MCF 10A (cell line): ENCODE measurements at regions of chr4 and their contacts with region 1.

Region 1: DNA sequence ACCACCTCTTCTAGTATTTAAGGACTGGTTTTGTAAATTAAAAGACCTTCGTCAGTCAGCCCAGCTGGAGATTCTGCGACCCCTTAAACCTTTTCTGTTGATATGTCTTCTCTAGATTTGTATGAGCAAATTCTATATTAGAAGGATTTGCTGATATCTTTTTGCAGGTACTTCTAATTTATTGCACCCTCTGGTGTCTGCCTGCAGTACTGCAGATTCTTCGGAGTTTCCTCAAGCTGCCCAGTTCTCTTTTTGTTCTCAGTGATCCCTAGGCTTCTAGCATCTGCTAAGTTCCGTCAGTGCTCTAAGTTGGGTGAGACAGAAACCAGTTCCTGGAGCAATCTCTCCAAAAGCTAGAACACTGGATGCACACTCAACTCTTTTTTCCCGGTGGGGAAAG is 545.2 kb downstream of the C4orf33 start:
- DNase-seq: peak; percentile 63
- H3K4me3 Mint-ChIP-seq: no peak overlapping the region
- H3K27ac Mint-ChIP-seq: no peak overlapping the region
- H3K4me1 Mint-ChIP-seq: no peaks in the 10 kb centered on the region
- H3K27me3 Mint-ChIP-seq: no peaks in the 10 kb centered on the region
- CTCF ChIP-seq: peak; percentile 43

Region 2: GRCh38 chr4:128440923-128441322 is 1200.3 kb before region 1 on chr4:
- CTCF ChIA-PET with region 1: no interaction called
- POLR2A ChIA-PET with region 1: no interaction called
- intact Hi-C with region 1: no loop called
- DNase-seq: no peak
- H3K4me3 Mint-ChIP-seq: no peak overlapping the region
- H3K27ac Mint-ChIP-seq: no peak overlapping the region
- H3K4me1 Mint-ChIP-seq: no peaks in the 10 kb centered on the region
- H3K27me3 Mint-ChIP-seq: no peaks in the 10 kb centered on the region
- CTCF ChIP-seq: no peak

Region 3: DNA sequence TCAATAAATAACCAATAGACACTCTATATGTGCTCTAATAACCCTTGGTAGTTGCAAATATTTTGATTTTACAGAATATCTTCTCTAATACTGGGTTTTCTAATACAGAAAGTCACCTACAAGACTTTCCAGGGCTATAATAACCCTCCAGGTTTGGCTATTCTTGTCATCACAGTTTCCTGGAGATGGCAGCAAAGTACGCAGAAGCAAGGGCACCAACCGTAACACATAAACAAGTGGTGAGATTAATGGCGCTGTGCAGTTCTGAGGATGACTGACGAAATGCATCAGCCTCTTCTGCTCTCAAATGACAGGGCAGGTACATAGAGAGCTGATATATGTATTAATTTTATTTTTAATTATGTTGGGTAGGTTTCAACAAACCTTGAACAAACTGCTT is 422.8 kb before region 1 on chr4:
- CTCF ChIA-PET with region 1: no interaction called
- POLR2A ChIA-PET with region 1: no interaction called
- intact Hi-C with region 1: no loop called
- DNase-seq: no peak
- H3K4me3 Mint-ChIP-seq: no peak overlapping the region
- H3K27ac Mint-ChIP-seq: no peak overlapping the region
- H3K4me1 Mint-ChIP-seq: no peaks in the 10 kb centered on the region
- H3K27me3 Mint-ChIP-seq: no peaks in the 10 kb centered on the region
- CTCF ChIP-seq: no peak

Region 4: GRCh38 chr4:129344058-129344457 is 297.1 kb before region 1 on chr4:
- CTCF ChIA-PET with region 1: interaction called, 28 read pairs
- POLR2A ChIA-PET with region 1: no interaction called
- intact Hi-C with region 1: loop called (anchors 1 kb)
- DNase-seq: peak; percentile 75
- H3K4me3 Mint-ChIP-seq: no peak overlapping the region
- H3K27ac Mint-ChIP-seq: no peak overlapping the region
- H3K4me1 Mint-ChIP-seq: peaks cover 15% of the 10 kb centered on the region
- H3K27me3 Mint-ChIP-seq: no peaks in the 10 kb centered on the region
- CTCF ChIP-seq: peak; percentile 66

Region 5: DNA sequence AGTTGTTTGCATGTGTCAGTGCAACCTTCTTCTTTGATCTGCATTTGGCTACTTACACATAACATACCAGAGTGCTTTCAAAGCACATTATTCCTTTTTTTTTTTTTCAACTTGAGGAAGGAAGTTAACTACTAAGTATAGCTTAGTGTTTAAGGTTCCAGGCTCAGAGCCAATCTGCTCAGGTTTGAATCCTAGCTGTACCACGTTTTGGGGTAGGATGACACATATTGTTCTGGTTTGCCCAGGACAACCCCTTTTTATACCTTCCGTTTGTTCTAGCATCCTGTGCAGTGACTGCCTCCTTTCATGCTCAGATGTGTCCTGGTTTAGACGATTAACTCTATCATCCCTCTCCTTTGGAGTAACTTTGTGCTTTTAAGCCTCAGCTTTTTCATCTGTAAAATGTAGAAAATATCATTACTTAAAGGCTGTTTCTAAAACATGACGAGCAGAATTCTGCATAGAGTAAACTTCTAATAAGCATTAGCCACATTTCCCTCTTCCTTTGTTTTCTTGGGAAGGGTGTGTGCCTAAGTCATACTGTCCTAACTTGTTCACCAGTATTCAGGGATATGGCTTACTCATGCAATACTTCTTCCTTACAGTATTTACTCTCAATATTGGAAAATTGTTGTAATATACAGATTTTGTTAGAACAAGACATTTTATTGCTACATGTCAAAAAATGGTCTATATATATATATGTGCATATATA is 263.9 kb before region 1 on chr4:
- CTCF ChIA-PET with region 1: interaction called, 22 read pairs
- POLR2A ChIA-PET with region 1: no interaction called
- intact Hi-C with region 1: no loop called
- DNase-seq: peak; percentile 9
- H3K4me3 Mint-ChIP-seq: no peak overlapping the region
- H3K27ac Mint-ChIP-seq: no peak overlapping the region
- H3K4me1 Mint-ChIP-seq: peaks cover 16% of the 10 kb centered on the region
- H3K27me3 Mint-ChIP-seq: no peaks in the 10 kb centered on the region
- CTCF ChIP-seq: no peak

Region 6: GRCh38 chr4:129532573-129532972 is 108.6 kb before region 1 on chr4:
- CTCF ChIA-PET with region 1: interaction called, 133 read pairs
- POLR2A ChIA-PET with region 1: interaction called, 3 read pairs
- intact Hi-C with region 1: loop called (anchors 1 kb)
- DNase-seq: no peak
- H3K4me3 Mint-ChIP-seq: no peak overlapping the region
- H3K27ac Mint-ChIP-seq: no peak overlapping the region
- H3K4me1 Mint-ChIP-seq: no peaks in the 10 kb centered on the region
- H3K27me3 Mint-ChIP-seq: no peaks in the 10 kb centered on the region
- CTCF ChIP-seq: no peak

Region 7: DNA sequence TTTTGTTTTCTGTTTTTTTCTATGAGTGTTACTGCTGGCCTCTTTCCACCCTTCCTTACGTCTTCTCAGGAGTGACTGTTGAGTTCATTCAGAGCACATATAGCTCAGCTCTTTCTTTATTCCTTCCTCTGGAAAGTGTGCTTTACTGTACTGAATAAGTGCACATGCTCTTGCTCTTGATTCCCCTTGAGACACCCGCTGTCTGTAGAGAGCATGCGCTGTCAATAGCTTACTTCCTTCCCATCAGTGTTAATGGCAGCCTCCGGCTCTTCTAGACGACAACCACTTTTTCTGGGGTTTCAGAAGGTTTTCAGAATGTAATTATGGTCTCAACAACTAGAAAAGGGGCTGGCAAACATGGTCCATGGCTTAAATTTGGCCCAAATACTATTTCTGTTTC is 40.3 kb before region 1 on chr4:
- CTCF ChIA-PET with region 1: interaction called, 10 read pairs
- POLR2A ChIA-PET with region 1: no interaction called
- intact Hi-C with region 1: no loop called
- DNase-seq: no peak
- H3K4me3 Mint-ChIP-seq: no peak overlapping the region
- H3K27ac Mint-ChIP-seq: no peak overlapping the region
- H3K4me1 Mint-ChIP-seq: no peaks in the 10 kb centered on the region
- H3K27me3 Mint-ChIP-seq: no peaks in the 10 kb centered on the region
- CTCF ChIP-seq: no peak

Region 8: DNA sequence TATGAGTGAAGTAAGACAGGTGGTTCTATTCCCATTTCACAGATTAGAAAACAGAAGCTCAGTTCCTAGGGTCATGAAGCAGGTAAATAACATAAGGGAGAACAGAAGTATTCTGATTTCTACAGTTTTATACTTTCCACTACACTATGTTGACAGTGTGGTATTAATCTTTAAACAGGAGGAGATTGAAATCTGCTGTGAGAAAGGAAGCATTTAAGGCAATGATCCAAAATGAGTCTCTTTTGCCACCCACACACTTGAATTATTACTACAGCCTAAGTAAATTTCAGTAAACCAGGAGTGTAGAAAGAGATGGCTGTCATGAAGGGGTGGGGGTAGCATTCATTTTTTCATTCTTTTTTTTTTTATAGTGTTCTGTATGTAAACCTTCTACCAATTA is 347.8 kb after region 1 on chr4:
- CTCF ChIA-PET with region 1: no interaction called
- POLR2A ChIA-PET with region 1: no interaction called
- intact Hi-C with region 1: no loop called
- DNase-seq: no peak
- H3K4me3 Mint-ChIP-seq: no peak overlapping the region
- H3K27ac Mint-ChIP-seq: no peak overlapping the region
- H3K4me1 Mint-ChIP-seq: no peaks in the 10 kb centered on the region
- H3K27me3 Mint-ChIP-seq: no peaks in the 10 kb centered on the region
- CTCF ChIP-seq: no peak